Left cardiac atrium (tissue), 4 donors: ENCODE measurements at regions of chr1 and their contacts with region 1.

Region 1: DNA sequence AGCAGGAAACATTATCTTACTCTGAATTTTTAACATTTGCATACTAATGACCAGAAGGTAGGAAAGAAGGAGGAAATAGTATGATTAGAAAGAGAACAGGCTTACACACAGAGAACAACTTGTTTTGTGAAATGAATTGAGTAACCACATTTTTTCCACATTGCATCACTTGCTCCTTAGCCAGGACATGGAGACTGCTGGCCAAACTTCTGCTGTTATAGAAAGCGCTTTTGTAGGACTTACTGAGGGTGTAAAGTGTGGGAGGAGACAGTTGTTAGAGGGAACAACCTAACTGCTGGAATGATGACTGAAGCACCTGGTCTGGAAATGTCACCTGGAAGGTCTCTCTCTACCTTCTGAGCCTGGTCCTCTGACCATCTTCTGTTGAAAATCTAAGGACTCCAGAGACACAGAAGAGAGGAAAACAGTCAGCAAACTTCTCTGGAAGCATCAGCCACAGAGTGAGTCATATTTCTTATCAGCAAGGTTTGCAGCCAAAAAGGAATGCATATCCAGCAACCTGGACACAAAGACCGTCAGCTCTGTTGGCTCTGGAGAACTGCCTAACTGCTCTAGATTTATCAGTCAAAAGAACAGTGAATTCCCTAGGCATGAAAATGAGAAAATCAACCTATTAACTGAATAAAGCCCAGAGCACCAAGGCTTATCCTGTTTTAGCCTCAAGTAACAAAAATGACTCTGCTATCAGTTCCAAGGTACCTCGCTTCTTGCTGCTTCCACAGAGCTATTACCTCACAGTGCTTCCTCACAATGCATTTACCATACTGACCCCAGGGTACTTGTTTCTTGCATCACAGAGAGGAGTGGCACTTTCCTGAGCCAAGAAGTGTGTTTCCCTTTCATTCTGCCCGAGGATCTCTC is 88.0 kb upstream of the SLFNL1 start:
- DNase-seq: peak; percentile 48
- ATAC-seq: peak; percentile 94

Region 2: DNA sequence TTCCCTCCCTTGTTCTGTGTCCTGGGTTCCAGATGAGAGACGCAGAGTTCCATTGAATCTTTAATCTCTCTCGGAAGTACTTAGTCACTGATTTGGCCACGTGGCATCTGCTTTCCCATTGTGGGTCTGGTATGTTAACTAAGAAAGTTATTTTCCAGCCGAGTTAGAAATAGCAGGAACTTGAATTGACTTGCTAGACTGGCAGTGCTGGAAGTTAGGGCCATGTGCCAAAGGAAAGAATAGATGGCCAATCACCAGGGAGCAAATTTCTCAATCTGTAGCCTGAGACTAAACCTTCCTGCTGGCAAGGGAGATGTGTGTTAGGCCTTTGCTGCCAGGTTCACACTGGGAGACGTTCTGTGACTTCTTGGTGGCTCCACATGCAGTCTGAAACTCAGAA is 63.8 kb before region 1 on chr1:
- intact Hi-C with region 1: loop called in 1 of 2 experiments (anchors 5 kb)
- DNase-seq: peak; percentile 73
- ATAC-seq: peak; percentile 82 to 92

Region 3: GRCh38 chr1:41093826-41094225 is 15.7 kb before region 1 on chr1:
- intact Hi-C with region 1: no loop called
- DNase-seq: no peak
- ATAC-seq: no peak